Left cardiac atrium (tissue), 4 donors: ENCODE measurements at regions of chr1 and their contacts with region 1.

Region 1: GRCh38 chr1:10796019-10796944 is at the start of gene CASZ1:
- DNase-seq: peak; percentile 80
- ATAC-seq: peak; percentile 74 to 79
- total RNA-seq, gene CASZ1: 37.6 to 68.2 TPM

Region 2: GRCh38 chr1:10530281-10530740 is 266.0 kb before region 1 on chr1:
- intact Hi-C with region 1: loop called in 1 of 2 experiments (anchors 10 kb)
- DNase-seq: peak; percentile 47
- ATAC-seq: peak; percentile 66 to 76

Region 3: GRCh38 chr1:10679496-10680220 is 116.6 kb before region 1 on chr1:
- intact Hi-C with region 1: loop called in 1 of 2 experiments (anchors 5 kb)
- DNase-seq: no peak
- ATAC-seq: peak; percentile 2 to 9

Region 4: DNA sequence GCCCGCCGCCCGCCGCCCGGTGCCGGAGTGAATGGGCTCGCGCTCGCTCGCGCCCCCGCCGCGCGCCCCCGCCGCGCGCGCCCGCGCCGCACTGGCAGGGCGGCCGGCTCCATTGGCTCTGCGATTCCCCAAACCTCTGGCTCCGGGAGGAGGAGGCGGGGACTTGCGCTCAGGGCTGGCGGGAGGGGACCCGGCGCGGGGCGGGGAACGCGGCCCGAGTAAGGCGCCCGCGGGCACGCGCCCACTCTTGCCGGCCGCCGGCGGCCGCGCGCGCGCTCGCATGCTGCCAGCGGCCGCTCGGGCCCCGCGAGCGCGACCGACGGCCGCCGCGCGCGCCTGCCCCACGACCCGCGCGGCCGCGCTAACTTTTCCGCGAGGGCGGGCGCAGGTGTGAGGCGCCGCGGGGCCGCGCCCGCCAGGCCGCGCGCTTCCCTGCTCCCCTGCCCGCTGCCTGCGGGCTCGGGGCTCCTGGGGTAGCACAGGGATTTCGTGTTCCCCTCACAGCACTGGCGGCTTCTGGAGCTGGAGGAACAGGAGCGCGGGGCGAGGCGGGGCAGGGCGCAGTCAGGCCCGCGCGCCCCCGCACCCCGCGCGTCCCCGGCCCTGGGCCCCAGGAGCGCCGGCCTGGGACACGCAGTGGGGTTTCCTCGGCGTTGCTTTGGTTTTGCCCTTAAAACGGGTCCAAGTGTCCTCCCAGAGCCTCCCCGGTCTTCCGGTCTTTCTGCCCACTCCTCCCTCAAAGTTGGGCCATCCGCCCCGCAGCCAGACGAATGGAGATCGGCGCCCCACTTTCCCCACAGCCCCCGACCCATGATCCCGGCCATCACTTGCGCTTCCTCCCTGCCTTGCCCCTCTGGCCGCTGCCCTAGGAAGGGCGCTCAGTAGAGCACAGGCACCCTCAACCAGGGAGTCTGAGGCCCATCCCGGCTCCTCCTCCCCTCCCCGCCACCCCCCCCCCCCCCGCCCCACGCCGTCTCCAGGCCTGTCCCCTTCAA is 101.4 kb before region 1 on chr1:
- intact Hi-C with region 1: loop called in 1 of 2 experiments (anchors 10 kb)
- DNase-seq: peak; percentile 94
- ATAC-seq: peak; percentile 80 to 90

Region 5: GRCh38 chr1:10731041-10731440 is 65.2 kb before region 1 on chr1:
- intact Hi-C with region 1: loop called in 1 of 2 experiments (anchors 10 kb)
- DNase-seq: no peak
- ATAC-seq: peak in 1 of 2 donors; percentile 35

Region 6: DNA sequence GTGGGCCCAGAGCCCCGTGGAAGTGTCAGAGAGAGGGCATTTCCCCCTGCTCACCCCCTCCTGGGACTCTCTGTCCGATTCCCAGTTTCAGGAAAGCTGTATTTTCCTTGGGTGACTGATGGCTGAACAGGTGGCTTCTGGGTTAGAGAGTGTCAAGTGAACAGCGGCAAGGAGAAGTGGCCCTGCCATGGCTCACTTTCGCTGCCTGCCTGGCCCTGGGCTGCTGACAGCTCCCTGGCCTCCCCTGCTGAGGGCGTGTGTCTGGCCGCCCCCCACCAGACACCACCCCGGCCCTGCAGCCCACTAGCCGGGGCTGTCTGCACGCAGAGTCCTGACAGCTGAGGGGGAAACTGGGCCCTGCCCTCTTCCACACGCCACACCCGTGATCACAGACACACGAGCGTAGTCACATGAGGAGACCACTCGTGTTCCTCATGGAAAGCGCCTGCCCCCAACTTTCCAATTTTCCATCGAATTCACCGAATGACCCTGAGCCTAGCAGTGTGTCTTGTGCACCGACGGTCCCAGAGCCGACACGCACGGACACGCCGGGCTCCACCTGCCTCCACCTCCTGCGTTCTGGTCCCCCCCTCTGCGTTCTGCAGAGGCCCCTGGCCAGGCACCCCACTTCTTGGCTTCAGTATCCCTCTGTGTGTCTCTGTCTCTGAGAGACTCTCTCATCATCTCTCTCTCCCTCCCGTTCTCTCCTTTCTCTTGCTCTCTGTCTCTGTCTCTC is 60.7 kb after region 1 on chr1:
- intact Hi-C with region 1: loop called (anchors 5 kb)
- DNase-seq: no peak
- ATAC-seq: no peak

Region 7: GRCh38 chr1:10867138-10867721 is 70.9 kb after region 1 on chr1:
- intact Hi-C with region 1: loop called in 1 of 2 experiments (anchors 5 kb)
- DNase-seq: peak; percentile 70
- ATAC-seq: peak; percentile 86 to 90

Region 8: GRCh38 chr1:11012250-11013171 is 216.2 kb after region 1 on chr1 and contains the start of gene TARDBP:
- intact Hi-C with region 1: no loop called
- DNase-seq: peak; percentile 91
- ATAC-seq: peak; percentile 96 to 97
- total RNA-seq, gene TARDBP: 102 to 119 TPM